ENCODE measurements at regions of chr1 and their contacts with region 1.

Region 1: GRCh38 chr1:182752077-182752988 is 37.2 kb upstream of the NPL start:
- DNase-seq: no peak
- ATAC-seq: no peak
- H3K4me3 ChIP-seq: no peak overlapping the region
- H3K27ac ChIP-seq: no peak overlapping the region
- H3K4me1 ChIP-seq: no peaks in the 10 kb centered on the region
- H3K27me3 ChIP-seq: peaks cover 16 to 20% of the 10 kb centered on the region in 2 experiments
- CTCF ChIP-seq: no peak
- EP300 ChIP-seq: no peak
- POLR2A ChIP-seq: no peak
- RAD21 ChIP-seq: no peak

Region 2: GRCh38 chr1:182731852-182732545 is 20.3 kb before region 1 on chr1:
- CTCF ChIA-PET with region 1: no interaction called
- POLR2A ChIA-PET with region 1: interaction called, 5 read pairs
- in situ Hi-C with region 1: no loop called
- intact Hi-C with region 1: loop called (anchors 2 kb)
- DNase-seq: no peak
- ATAC-seq: no peak
- H3K4me3 ChIP-seq: no peak overlapping the region
- H3K27ac ChIP-seq: no peak overlapping the region
- H3K4me1 ChIP-seq: no peaks in the 10 kb centered on the region
- H3K27me3 ChIP-seq: peaks cover 3 to 17% of the 10 kb centered on the region in 2 experiments; a peak in 3 of 5 replicates
- CTCF ChIP-seq: no peak
- EP300 ChIP-seq: no peak
- POLR2A ChIP-seq: no peak
- RAD21 ChIP-seq: no peak

Measured in K562 (cell line).